ENCODE measurements at regions of chr9 and their contacts with region 1.

Region 1: GRCh38 chr9:132268725-132269352 is 85.9 kb downstream of the SETX start:
- DNase-seq: no peak
- H3K4me3 ChIP-seq: no peak overlapping the region
- CTCF ChIP-seq: peak; percentile 77

Region 2: GRCh38 chr9:131755541-131756198 is 513.2 kb before region 1 on chr9:
- CTCF ChIA-PET with region 1: interaction called, 331 read pairs
- POLR2A ChIA-PET with region 1: no interaction called
- DNase-seq: no peak
- H3K4me3 ChIP-seq: no peak overlapping the region
- CTCF ChIP-seq: peak; percentile 96

Region 3: DNA sequence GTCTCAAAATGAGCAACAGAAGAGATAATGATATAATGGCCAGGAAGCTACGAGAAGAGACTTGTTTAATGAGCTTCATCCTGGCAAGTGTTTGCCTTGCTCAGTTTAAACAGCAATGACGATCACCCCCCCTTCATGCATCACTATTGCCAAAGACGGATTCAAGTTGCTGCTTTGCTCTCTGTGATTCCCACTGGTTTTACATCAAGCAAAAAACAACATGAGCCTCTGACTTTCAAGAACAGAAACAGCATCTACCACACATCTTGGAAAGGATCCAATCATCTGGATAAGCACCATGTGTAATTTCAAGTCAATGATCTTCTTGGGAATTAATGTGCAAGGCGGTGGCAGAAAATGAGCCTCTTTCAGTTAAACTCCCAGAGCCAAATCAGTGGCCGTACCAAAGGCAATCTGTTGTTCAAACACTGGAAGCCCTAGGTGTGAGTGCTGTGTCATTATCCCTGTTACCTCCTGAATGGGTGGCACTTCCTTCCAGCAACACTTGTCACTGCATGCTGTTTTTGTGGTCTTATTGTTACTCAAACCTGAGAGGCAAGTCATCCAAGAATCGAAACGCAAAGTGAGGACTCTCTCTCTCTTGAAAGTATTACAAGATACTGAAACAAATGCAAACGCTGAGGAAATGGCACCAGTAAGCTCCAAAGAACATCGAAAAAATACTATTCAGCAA is 262.0 kb before region 1 on chr9:
- CTCF ChIA-PET with region 1: no interaction called
- POLR2A ChIA-PET with region 1: no interaction called
- DNase-seq: no peak
- H3K4me3 ChIP-seq: no peak overlapping the region
- CTCF ChIP-seq: no peak

Region 4: DNA sequence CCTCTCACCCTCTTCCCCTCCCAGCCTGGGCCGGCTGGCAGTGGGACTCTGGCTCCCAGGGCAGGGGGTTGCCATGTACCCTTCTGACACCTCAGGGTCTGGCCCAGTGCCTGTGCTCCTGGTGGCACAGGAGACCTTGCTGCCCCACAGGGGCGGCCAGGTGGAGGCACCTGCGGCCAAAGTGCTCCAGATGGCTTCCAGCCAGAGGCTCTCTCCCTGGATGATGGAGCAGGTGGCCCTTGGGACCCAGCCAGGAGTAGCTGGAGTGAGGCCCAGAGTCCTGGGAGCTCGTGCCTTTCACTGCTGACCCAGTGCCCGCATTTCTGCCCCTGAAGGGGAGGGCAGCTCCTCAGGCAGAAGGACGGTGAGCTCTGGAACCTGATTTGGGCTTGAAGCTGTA is 19.7 kb before region 1 on chr9:
- CTCF ChIA-PET with region 1: interaction called, 126 read pairs
- POLR2A ChIA-PET with region 1: no interaction called
- DNase-seq: no peak
- H3K4me3 ChIP-seq: no peak overlapping the region
- CTCF ChIP-seq: no peak

Region 5: DNA sequence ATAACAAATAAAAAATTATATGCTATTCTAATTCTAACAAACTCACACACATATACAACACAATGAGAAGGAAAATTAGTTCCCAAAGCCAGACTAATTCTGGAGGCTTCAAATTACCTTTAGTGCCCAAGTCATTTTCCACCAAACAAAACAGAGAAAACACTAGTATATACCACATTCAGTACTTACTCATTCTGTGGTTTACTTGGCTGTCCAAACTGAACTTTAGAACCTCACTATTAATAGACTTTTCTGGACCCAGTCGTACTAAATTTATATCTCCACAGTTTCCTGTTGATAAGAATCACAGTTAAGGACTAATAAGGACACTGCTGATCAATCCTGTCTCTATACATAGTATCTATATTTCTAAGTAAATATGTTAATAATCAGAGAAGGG is 19.5 kb after region 1 on chr9:
- CTCF ChIA-PET with region 1: interaction called, 19 read pairs
- POLR2A ChIA-PET with region 1: no interaction called
- DNase-seq: peak; percentile 47
- H3K4me3 ChIP-seq: no peak overlapping the region
- CTCF ChIP-seq: no peak

Region 6: GRCh38 chr9:132309013-132309412 is 40.2 kb after region 1 on chr9:
- CTCF ChIA-PET with region 1: interaction called, 14 read pairs
- POLR2A ChIA-PET with region 1: no interaction called
- DNase-seq: no peak
- H3K4me3 ChIP-seq: no peak overlapping the region
- CTCF ChIP-seq: no peak

Region 7: DNA sequence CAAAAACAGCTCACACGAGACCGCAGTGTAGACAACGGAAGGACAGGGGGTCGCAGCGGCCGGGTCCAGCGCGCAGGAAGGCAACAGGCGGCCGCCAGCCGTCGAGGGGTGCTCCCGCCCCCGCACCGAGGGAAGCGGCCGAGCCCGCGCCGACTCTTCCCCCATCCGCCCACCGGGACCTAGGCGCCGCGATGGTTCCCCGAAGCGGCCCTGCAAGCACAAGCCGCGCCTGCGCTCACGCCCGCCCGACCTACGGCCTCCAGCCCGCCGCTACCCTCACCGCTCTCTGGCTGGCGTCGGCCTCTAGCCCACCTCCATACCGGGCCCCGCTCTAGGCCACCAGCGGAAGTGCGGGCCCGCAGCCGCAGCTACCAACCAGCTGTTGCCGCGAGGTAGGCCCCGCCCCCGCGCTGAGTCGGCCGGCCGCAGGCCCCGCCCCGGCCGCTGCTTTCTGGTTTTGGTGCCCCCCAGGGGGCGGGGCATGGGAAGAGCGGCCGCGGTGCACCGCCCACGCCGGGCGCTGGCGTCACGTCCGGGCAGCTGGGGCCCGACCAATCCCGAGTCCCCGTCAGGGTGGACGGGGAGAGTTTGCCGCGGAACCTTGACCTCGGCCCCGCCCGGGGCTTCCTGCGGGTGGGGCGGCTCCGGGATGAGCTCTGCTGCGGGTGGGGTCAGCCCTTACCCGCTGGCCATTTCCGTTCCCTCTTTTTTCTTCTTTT is 86.0 kb after region 1 on chr9 and contains the start of gene SETX:
- CTCF ChIA-PET with region 1: interaction called, 17 read pairs
- POLR2A ChIA-PET with region 1: no interaction called
- DNase-seq: peak; percentile 57
- H3K4me3 ChIP-seq: peak within 1 kb of the TSS; percentile 82
- CTCF ChIP-seq: no peak

Region 8: GRCh38 chr9:132383462-132383883 is 114.6 kb after region 1 on chr9:
- CTCF ChIA-PET with region 1: no interaction called
- POLR2A ChIA-PET with region 1: no interaction called
- DNase-seq: no peak
- H3K4me3 ChIP-seq: no peak overlapping the region
- CTCF ChIP-seq: no peak

Measured in AG04449 (cell line).